ENCODE measurements at regions of chr2 and their contacts with region 1.

Region 1: GRCh38 chr2:19369341-19369955 is 11.0 kb upstream of the OSR1 start:
- DNase-seq: peak; percentile 23
- ATAC-seq: peak; percentile 70
- H3K4me3 ChIP-seq: no peak overlapping the region
- H3K27ac ChIP-seq: no peak overlapping the region
- H3K4me1 ChIP-seq: peaks cover 4% of the 10 kb centered on the region; the same call in 1 of the 2 replicates
- H3K27me3 ChIP-seq: peaks cover 1 to 32% of the 10 kb centered on the region in 2 experiments; a peak in 4 of 5 replicates
- CTCF ChIP-seq: peak; percentile 70
- EP300 ChIP-seq: no peak
- POLR2A ChIP-seq: no peak
- RAD21 ChIP-seq: no peak

Region 2: GRCh38 chr2:19409046-19409445 is 39.6 kb after region 1 on chr2:
- CTCF ChIA-PET with region 1: no interaction called
- POLR2A ChIA-PET with region 1: no interaction called
- in situ Hi-C with region 1: no loop called
- intact Hi-C with region 1: no loop called
- DNase-seq: no peak
- ATAC-seq: no peak
- H3K4me3 ChIP-seq: no peak overlapping the region
- H3K27ac ChIP-seq: no peak overlapping the region
- H3K4me1 ChIP-seq: no peaks in the 10 kb centered on the region
- H3K27me3 ChIP-seq: 0 out of 5 replicates have a peak, but pooled peaks cover 0 to 3% of the 10 kb centered on the region in 2 experiments
- CTCF ChIP-seq: no peak
- EP300 ChIP-seq: no peak
- POLR2A ChIP-seq: no peak
- RAD21 ChIP-seq: no peak

Region 3: DNA sequence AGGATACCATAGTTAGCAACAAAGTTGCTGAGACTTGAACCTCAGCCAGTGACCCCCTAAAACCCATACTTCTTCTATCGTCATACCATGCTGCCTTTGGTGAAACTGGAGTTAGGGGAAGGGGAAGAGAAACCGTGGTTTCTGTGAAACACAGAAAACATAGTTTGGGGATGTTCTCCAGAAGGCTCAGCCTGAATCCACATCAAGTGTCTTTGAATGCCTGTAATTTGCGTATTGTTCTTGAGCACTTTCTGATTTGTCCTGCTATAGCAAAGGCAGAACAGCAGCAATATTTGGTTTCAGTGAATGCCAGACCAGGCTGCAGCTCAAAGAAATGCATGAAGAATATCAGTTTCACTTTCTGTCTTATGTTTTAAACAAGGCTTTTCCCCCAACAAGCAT is 273.7 kb after region 1 on chr2:
- CTCF ChIA-PET with region 1: no interaction called
- POLR2A ChIA-PET with region 1: no interaction called
- in situ Hi-C with region 1: no loop called
- intact Hi-C with region 1: no loop called
- DNase-seq: no peak
- ATAC-seq: no peak
- H3K4me3 ChIP-seq: no peak overlapping the region
- H3K27ac ChIP-seq: no peak overlapping the region
- H3K4me1 ChIP-seq: peaks cover 7% of the 10 kb centered on the region; the same call in 1 of the 2 replicates
- H3K27me3 ChIP-seq: no peaks in the 10 kb centered on the region; a peak in 1 of 5 replicates
- CTCF ChIP-seq: no peak
- EP300 ChIP-seq: no peak
- POLR2A ChIP-seq: no peak
- RAD21 ChIP-seq: no peak

Region 4: DNA sequence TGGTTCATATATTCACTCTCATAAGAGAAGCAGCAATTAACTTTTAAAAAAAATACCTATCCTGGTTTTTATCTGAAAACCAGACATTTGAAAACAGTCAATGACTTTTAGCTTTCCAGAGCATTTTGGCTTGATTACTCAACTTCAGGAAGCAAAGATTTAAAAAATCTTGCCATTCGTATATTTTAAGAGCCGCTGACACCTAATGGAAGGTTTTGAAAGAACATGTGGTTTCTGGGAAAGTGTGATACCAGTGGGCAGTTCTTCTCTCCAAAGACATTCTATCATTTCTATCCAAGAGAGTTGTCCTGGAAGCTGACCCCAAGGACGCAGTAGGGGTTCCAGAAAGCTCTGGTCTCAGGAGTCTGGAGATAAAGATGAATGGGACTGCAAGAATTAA is 297.6 kb after region 1 on chr2:
- CTCF ChIA-PET with region 1: no interaction called
- POLR2A ChIA-PET with region 1: no interaction called
- in situ Hi-C with region 1: no loop called
- intact Hi-C with region 1: loop called (anchors 1 kb)
- DNase-seq: no peak
- ATAC-seq: no peak; the same call in 2 of the 3 replicates
- H3K4me3 ChIP-seq: no peak overlapping the region
- H3K27ac ChIP-seq: no peak overlapping the region
- H3K4me1 ChIP-seq: 0 out of 2 replicates have a peak, but pooled peaks cover 6% of the 10 kb centered on the region
- H3K27me3 ChIP-seq: peaks cover 1 to 14% of the 10 kb centered on the region in 2 experiments; a peak in 2 of 5 replicates
- CTCF ChIP-seq: peak; percentile 45; the same call in 1 of the 2 replicates
- EP300 ChIP-seq: no peak
- POLR2A ChIP-seq: no peak
- RAD21 ChIP-seq: no peak